ENCODE measurements at regions of chr3 and their contacts with region 1.

Region 1: DNA sequence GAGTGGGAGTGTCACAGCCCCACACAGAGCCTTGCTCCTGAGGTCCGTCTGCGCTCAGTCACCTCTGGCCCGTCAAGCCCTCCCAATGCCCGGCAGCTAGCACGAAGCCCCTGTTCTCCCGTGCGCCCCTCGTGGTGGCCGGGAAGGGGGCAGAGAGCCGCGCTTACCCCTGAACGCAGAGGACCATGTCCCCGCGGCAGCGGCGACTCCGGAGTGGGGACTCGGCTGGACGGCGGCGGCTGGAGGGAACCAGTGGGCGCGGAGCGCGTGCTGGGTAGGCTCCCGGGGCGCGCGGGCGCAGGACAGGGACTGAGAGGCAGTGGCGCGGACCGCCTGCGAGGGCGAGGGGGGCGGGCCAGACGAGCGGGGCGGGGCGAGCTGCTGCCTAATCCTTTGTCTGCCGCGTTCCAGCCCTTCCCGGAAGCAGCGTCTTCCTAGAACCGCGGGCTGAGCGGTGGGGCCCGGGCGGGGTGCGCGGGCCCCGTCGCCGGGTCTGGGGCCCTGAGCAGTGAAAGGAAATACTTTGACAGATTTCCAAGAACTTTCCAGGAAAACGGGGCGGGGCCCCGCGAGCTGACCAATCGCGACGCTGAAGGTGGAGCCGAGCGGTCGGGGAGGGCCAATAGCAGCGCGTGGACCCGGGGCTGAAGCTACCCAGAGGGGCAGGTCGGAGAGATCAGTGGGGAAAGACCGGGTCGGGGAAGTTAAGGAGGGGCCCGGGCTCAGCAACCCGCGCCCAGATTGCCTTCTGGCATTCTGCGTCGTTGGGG is at the start of gene CISH:
- DNase-seq: peak; percentile 96 to 98 (median 97)
- ATAC-seq: peak; percentile 80 to 86 (median 82)
- H3K4me3 ChIP-seq: peak within 1 kb of the TSS; percentile 56 to 95 (median 80)
- H3K27ac ChIP-seq: peak within 1 kb of the TSS; percentile 77 to 100 (median 92)
- H3K4me1 ChIP-seq: peaks cover 5 to 81% (median 63%) of the 10 kb centered on the region in 12 donors
- H3K27me3 ChIP-seq: no peaks in the 10 kb centered on the region
- CTCF ChIP-seq: peak; percentile 7 to 59 (median 34)
- POLR2A ChIP-seq: peak; percentile 21 to 56
- total RNA-seq, gene CISH: 10.1 to 57.0 (median 20.3) TPM

Region 2: GRCh38 chr3:50358911-50359759 is 252.5 kb before region 1 on chr3 and contains the start of gene TMEM115:
- intact Hi-C with region 1: loop called in 2 of 10 experiments (anchors 5 kb)
- DNase-seq: peak; percentile 96 to 99 (median 99)
- ATAC-seq: peak; percentile 97 to 99 (median 98)
- H3K4me3 ChIP-seq: peak within 1 kb of the TSS; percentile 60 to 97 (median 80)
- H3K27ac ChIP-seq: peak within 1 kb of the TSS; percentile 77 to 97 (median 90)
- H3K4me1 ChIP-seq: peaks cover 19 to 51% (median 40%) of the 10 kb centered on the region in 12 donors
- H3K27me3 ChIP-seq: no peaks in the 10 kb centered on the region
- CTCF ChIP-seq: no peak
- POLR2A ChIP-seq: peak in 1 of 2 donors; percentile 73
- total RNA-seq, gene TMEM115: 20.5 to 56.4 (median 28.9) TPM

Region 3: GRCh38 chr3:50568947-50569749 is 42.5 kb before region 1 on chr3 and contains the start of gene HEMK1:
- intact Hi-C with region 1: loop called (anchors 1 kb)
- DNase-seq: peak; percentile 98 to 99 (median 99)
- ATAC-seq: peak; percentile 87 to 92 (median 89)
- H3K4me3 ChIP-seq: peak within 1 kb of the TSS; percentile 57 to 95 (median 81)
- H3K27ac ChIP-seq: peak within 1 kb of the TSS; percentile 70 to 98 (median 95)
- H3K4me1 ChIP-seq: peaks cover 0 to 66% (median 34%) of the 10 kb centered on the region in 12 donors
- H3K27me3 ChIP-seq: no peaks in the 10 kb centered on the region
- CTCF ChIP-seq: no peak
- POLR2A ChIP-seq: peak in 1 of 2 donors; percentile 34
- total RNA-seq, gene HEMK1: 7.8 to 19.7 (median 13.8) TPM

Region 4: DNA sequence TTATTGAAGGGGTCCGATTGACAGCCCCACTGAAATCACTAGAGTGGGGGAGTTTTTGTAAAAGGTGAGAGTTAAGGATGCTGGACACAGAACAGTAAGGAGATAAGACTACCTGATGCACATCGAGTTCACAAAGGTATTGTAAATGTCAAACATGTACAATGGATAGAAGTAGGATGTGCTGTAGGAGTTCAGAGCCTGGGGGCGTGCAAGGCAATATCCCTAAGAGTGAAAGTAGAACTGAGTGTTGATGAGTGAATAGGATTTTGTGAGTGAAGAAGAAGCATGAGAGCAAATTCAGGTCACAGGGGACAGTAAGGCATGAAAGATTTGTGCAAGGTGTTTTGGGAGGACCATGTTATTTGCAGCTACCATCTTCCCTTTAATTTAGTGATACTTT is 84.6 kb after region 1 on chr3:
- intact Hi-C with region 1: no loop called
- DNase-seq: no peak
- ATAC-seq: no peak
- H3K4me3 ChIP-seq: no peak overlapping the region
- H3K27ac ChIP-seq: no peak overlapping the region
- H3K4me1 ChIP-seq: no peaks in the 10 kb centered on the region
- H3K27me3 ChIP-seq: no peaks in the 10 kb centered on the region
- CTCF ChIP-seq: no peak
- POLR2A ChIP-seq: no peak

Region 5: DNA sequence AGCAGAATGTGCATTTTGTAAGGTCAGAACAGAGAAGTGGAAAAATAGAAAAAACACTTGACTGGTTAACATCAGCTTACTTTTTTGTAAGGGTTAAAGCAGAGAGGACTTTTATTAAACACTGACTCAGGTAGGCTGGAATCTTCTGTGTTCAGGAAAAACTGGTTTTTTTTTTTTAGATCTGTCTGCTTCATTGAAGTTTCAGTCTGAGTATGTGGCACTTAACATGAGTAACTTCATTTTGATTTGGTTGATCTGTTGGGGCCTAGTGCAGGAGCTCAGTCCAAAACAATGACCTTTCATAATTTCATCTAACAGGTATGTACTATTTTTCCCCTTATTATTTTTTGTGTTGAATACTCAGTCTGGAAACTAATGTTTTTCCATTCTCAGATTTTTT is 204.2 kb after region 1 on chr3:
- intact Hi-C with region 1: no loop called
- DNase-seq: no peak
- ATAC-seq: no peak
- H3K4me3 ChIP-seq: no peak overlapping the region
- H3K27ac ChIP-seq: no peak overlapping the region
- H3K4me1 ChIP-seq: peaks cover 0 to 6% (median 0%) of the 10 kb centered on the region in 12 donors
- H3K27me3 ChIP-seq: no peaks in the 10 kb centered on the region
- CTCF ChIP-seq: no peak
- POLR2A ChIP-seq: no peak

Region 6: GRCh38 chr3:50950591-50950990 is 338.9 kb after region 1 on chr3:
- intact Hi-C with region 1: no loop called
- DNase-seq: no peak
- ATAC-seq: no peak
- H3K4me3 ChIP-seq: no peak overlapping the region
- H3K27ac ChIP-seq: no peak overlapping the region
- H3K4me1 ChIP-seq: no peaks in the 10 kb centered on the region
- H3K27me3 ChIP-seq: no peaks in the 10 kb centered on the region
- CTCF ChIP-seq: no peak
- POLR2A ChIP-seq: no peak

Region 7: DNA sequence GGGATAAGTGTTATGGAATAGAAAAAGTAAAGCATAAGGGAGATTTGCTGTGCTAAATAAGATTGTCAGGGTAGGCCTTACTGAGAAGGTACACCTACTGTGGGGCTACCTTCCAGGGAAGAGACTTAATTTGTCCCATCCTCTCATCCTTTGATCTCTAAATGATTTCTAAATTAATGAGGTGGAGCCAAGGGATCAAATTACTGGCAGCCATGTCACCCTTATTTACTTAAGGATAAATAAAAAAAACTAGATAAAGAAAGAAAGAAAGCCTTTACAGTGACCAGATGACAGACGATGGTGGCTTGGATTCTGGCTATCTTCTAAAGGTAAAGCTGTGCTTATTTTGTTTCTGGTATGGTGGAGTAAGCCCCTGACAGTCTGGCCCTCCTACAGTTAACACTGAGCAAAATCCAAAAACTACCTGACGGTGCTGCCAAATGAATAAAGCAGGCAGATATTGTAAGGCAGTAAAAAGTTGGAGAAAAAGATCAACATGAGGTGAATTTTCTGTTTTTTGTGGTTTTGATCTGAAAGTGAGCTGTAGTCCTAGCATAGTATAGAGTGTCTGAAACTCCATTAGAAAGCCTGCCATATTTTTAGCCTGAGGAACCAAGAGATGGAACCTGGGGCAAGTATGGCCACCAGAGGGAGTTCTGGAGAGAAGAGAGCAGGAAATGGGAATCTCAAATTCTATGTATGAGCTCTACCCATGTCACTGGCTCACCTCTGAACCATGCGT is 488.3 kb after region 1 on chr3:
- intact Hi-C with region 1: loop called in 1 of 10 experiments (anchors 10 kb)
- DNase-seq: peak in 2 of 5 donors; percentile 13 to 26
- ATAC-seq: peak in 3 of 4 donors; percentile 49 to 67 (median 52)
- H3K4me3 ChIP-seq: no peak overlapping the region
- H3K27ac ChIP-seq: no peak overlapping the region
- H3K4me1 ChIP-seq: no peaks in the 10 kb centered on the region
- H3K27me3 ChIP-seq: no peaks in the 10 kb centered on the region
- CTCF ChIP-seq: peak; percentile 38 to 71 (median 56)
- POLR2A ChIP-seq: no peak

Region 8: GRCh38 chr3:51391075-51391567 is 779.5 kb after region 1 on chr3 and contains the start of gene RBM15B:
- intact Hi-C with region 1: loop called in 7 of 10 experiments (anchors 2 to 5 kb)
- DNase-seq: peak; percentile 98 to 100 (median 99)
- ATAC-seq: peak; percentile 93 to 97 (median 94)
- H3K4me3 ChIP-seq: peak within 1 kb of the TSS; percentile 57 to 90 (median 74)
- H3K27ac ChIP-seq: peak within 1 kb of the TSS; percentile 78 to 95 (median 89)
- H3K4me1 ChIP-seq: peaks cover 21 to 87% (median 69%) of the 10 kb centered on the region in 12 donors
- H3K27me3 ChIP-seq: no peaks in the 10 kb centered on the region
- CTCF ChIP-seq: peak in 9 of 12 donors; percentile 85 to 97 (median 91)
- POLR2A ChIP-seq: peak in 1 of 2 donors; percentile 70
- total RNA-seq, gene RBM15B: 12.7 to 21.5 (median 16.2) TPM

Region 9: GRCh38 chr3:51682079-51682478 is 1070.4 kb after region 1 on chr3:
- intact Hi-C with region 1: loop called in 1 of 10 experiments (anchors 10 kb)
- DNase-seq: peak; percentile 25 to 81 (median 78)
- ATAC-seq: peak; percentile 71 to 76 (median 72)
- H3K4me3 ChIP-seq: peak overlapping the region in 1 of 12 donors; percentile 17
- H3K27ac ChIP-seq: peak overlapping the region in 10 of 12 donors; percentile 27 to 92 (median 58)
- H3K4me1 ChIP-seq: peaks cover 22 to 93% (median 79%) of the 10 kb centered on the region in 12 donors
- H3K27me3 ChIP-seq: no peaks in the 10 kb centered on the region
- CTCF ChIP-seq: peak; percentile 70 to 83 (median 79)
- POLR2A ChIP-seq: no peak

Measured in heart left ventricle (tissue), 16 donors.